CD4-positive, alpha-beta memory T cell (primary cell): ENCODE measurements at regions of chr14 and their contacts with region 1.

Region 1: GRCh38 chr14:104800015-104800770 is 708 bp upstream of the ZBTB42 start:
- DNase-seq: peak; percentile 76 to 81 (median 80)
- H3K4me3 ChIP-seq: peak overlapping the region in 1 of 2 donors; percentile 38
- H3K4me3 Mint-ChIP-seq: peak overlapping the region; percentile 50 to 77 (median 74)
- H3K27ac ChIP-seq: peak overlapping the region; percentile 51
- H3K27ac Mint-ChIP-seq: peak overlapping the region; percentile 58 to 92 (median 91)
- H3K4me1 ChIP-seq: peaks cover 41% of the 10 kb centered on the region
- H3K4me1 Mint-ChIP-seq: peaks cover 13 to 58% (median 37%) of the 10 kb centered on the region in 4 donors
- H3K27me3 ChIP-seq: no peaks in the 10 kb centered on the region
- H3K27me3 Mint-ChIP-seq: no peaks in the 10 kb centered on the region

Region 2: DNA sequence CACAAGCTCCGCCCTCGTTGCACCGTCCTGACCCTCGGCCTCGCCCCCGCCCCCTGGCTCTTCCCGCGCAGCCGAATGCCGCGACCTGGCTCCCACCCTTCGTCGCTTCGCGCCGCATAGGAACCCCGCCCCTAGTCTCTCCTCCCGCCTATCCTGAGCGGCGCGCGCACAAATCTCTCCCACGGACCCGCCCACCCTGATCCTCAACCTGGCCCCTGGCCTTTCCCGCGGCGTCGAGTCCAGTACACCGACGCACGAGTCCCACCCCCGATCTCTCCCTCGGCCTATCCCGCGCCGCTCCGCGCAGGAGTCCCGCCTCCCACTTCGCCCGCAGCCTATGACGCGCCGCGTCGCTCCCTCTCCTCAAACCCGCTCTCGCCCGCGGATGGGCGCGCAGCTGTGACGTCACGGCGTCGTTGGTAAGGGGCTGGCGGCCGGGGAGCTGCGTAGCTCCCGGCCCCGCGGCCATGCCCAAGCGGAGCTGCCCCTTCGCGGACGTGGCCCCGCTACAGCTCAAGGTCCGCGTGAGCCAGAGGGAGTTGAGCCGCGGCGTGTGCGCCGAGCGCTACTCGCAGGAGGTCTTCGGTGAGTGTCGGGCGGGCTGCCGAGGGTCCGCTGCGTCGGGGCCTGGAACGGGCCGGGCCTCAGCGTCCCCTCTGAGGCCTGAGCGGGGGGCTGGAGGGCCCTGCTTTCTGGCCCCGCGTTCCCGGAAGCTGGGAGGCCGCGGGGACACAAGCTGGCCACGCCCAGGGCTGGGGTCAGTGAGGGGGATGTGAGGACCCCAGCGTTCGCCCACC is 47.3 kb before region 1 on chr14 and contains the start of gene SIVA1:
- CTCF ChIA-PET with region 1: no interaction called
- POLR2A ChIA-PET with region 1: interaction called, 27 read pairs
- intact Hi-C with region 1: loop called (anchors 1 kb)
- DNase-seq: peak; percentile 99
- H3K4me3 ChIP-seq: peak within 1 kb of the TSS; percentile 57 to 93
- H3K4me3 Mint-ChIP-seq: peak within 1 kb of the TSS; percentile 88 to 96 (median 92)
- H3K27ac ChIP-seq: peak within 1 kb of the TSS; percentile 79
- H3K27ac Mint-ChIP-seq: peak within 1 kb of the TSS; percentile 91 to 95 (median 94)
- H3K4me1 ChIP-seq: peaks cover 25% of the 10 kb centered on the region
- H3K4me1 Mint-ChIP-seq: peaks cover 16 to 41% (median 29%) of the 10 kb centered on the region in 4 donors
- H3K27me3 ChIP-seq: no peaks in the 10 kb centered on the region
- H3K27me3 Mint-ChIP-seq: no peaks in the 10 kb centered on the region
- total RNA-seq, gene SIVA1: 69.3 to 80.2 TPM

Region 3: DNA sequence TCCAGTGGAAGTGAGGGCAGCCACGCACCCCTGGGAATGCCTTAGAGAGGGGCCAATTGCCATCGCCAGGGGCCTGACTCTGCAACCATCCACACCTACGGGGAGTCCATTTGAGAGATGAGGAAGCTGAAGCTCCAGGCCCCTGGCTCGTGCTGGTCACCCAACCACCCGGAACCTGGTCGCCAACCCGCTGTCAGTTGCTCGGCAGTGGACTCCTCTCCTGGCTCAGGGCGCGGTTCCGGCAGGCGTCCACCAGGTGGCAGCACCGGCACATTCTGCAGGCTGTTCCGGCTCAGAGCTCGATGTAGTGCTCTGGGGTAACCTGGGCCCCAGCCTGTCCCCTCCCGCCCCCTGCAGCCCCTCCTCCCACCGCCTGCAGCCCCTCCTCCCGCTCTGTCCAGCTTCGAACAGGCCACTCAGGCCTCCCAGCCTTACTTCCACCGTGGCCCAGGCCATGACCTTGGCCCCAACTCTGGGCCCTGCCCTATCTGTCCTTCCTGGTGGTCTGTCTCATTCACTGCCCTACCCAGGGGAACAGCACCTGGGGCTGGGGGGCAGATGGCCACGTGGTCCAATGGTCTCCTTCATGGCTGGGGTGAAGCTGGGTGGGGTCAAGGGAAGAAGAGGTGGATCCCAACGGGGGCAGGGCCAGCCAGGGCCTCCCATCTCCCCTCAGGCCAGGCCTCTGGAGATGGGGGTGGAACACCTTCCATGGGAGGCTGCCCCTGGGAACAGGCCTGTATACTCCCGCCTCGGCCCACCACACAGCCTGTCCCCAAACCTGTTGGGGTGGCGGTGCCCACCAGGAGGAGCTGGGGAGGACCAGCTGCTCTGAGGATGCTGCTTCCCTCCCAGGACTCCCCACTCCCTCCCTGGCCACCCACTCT is 31.5 kb before region 1 on chr14:
- CTCF ChIA-PET with region 1: no interaction called
- POLR2A ChIA-PET with region 1: interaction called, 5 read pairs
- intact Hi-C with region 1: loop called (anchors 2 kb)
- DNase-seq: peak; percentile 83 to 89 (median 86)
- H3K4me3 ChIP-seq: no peak overlapping the region
- H3K4me3 Mint-ChIP-seq: no peak overlapping the region
- H3K27ac ChIP-seq: no peak overlapping the region
- H3K27ac Mint-ChIP-seq: peak overlapping the region in 4 of 7 donors; percentile 11 to 77 (median 56)
- H3K4me1 ChIP-seq: peaks cover 3% of the 10 kb centered on the region
- H3K4me1 Mint-ChIP-seq: peaks cover 0 to 4% (median under 1%) of the 10 kb centered on the region in 4 donors
- H3K27me3 ChIP-seq: no peaks in the 10 kb centered on the region
- H3K27me3 Mint-ChIP-seq: no peaks in the 10 kb centered on the region

Region 4: DNA sequence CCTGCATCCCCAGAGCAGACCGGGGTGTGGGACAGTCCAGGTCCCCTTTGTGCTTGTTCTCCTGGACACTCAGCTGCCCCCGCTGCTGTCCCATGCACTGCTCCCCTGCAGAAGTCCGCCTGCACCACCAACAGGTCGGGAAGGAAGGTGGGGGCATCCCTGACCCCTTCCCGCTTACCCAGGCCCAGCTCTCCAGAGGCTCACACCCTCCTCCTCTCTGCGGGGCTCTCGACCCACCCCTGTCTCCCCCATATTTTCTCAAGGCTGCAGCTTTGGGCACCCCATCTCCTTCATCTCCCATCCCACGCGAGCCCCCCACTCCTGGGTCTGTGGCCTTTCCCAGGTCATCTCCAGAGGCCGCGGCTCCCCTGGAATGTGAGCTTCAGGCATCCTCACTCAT is 10.1 kb after region 1 on chr14:
- CTCF ChIA-PET with region 1: interaction called, 3 read pairs
- POLR2A ChIA-PET with region 1: interaction called, 16 read pairs
- intact Hi-C with region 1: no loop called
- DNase-seq: peak in 1 of 5 donors; percentile 21
- H3K4me3 ChIP-seq: no peak overlapping the region
- H3K4me3 Mint-ChIP-seq: no peak overlapping the region
- H3K27ac ChIP-seq: no peak overlapping the region
- H3K27ac Mint-ChIP-seq: no peak overlapping the region
- H3K4me1 ChIP-seq: peaks cover 16% of the 10 kb centered on the region
- H3K4me1 Mint-ChIP-seq: peaks cover 9 to 18% (median 12%) of the 10 kb centered on the region in 4 donors
- H3K27me3 ChIP-seq: no peaks in the 10 kb centered on the region
- H3K27me3 Mint-ChIP-seq: no peaks in the 10 kb centered on the region

Region 5: GRCh38 chr14:104819361-104819974 is 19.3 kb after region 1 on chr14:
- CTCF ChIA-PET with region 1: interaction called, 5 read pairs
- POLR2A ChIA-PET with region 1: interaction called, 12 read pairs
- intact Hi-C with region 1: no loop called
- DNase-seq: no peak
- H3K4me3 ChIP-seq: no peak overlapping the region
- H3K4me3 Mint-ChIP-seq: no peak overlapping the region
- H3K27ac ChIP-seq: no peak overlapping the region
- H3K27ac Mint-ChIP-seq: no peak overlapping the region
- H3K4me1 ChIP-seq: peaks cover 20% of the 10 kb centered on the region
- H3K4me1 Mint-ChIP-seq: peaks cover 6 to 25% (median 12%) of the 10 kb centered on the region in 4 donors
- H3K27me3 ChIP-seq: no peaks in the 10 kb centered on the region
- H3K27me3 Mint-ChIP-seq: peaks cover 0 to 2% of the 10 kb centered on the region in 2 donors

Region 6: DNA sequence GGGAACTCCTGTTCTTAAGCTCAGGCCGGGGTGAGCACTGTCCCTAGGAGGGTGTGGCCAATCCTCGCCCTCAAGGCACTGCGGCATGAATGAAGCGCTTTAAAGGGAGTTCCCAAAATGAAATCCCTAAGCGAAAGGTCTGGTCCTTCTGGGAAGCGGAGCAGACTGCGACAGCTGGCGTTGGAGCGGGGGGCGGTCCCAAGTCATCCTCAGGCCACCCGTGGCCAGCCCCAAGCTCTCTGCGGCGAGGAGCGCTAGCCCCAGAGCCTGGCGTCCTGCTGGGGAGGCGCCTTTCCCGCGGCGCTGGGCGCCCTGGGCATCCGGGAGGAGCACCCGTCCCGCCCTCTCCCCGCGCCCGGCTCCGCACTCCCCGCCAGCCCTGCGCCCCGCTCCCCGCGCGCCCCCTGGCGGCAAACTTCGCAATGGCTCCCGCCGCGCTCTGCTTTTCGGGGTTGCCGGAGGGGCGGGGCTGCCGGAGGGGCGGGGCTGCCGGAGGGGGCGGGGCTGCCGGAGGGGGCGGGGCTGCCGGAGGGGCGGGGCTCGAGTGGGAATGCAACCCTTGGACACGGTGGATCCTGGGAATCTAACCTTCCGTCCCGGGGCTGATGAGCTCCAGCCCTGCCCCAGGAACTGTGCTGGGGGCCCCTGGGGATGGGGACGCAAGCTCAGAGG is 26.1 kb after region 1 on chr14:
- CTCF ChIA-PET with region 1: interaction called, 13 read pairs
- POLR2A ChIA-PET with region 1: interaction called, 25 read pairs
- intact Hi-C with region 1: loop called (anchors 1 kb)
- DNase-seq: peak; percentile 88 to 97 (median 90)
- H3K4me3 ChIP-seq: peak overlapping the region; percentile 61 to 70
- H3K4me3 Mint-ChIP-seq: peak overlapping the region; percentile 66 to 93 (median 86)
- H3K27ac ChIP-seq: peak overlapping the region; percentile 14
- H3K27ac Mint-ChIP-seq: peak overlapping the region in 4 of 7 donors; percentile 29 to 92 (median 63)
- H3K4me1 ChIP-seq: peaks cover 21% of the 10 kb centered on the region
- H3K4me1 Mint-ChIP-seq: peaks cover 14 to 32% (median 24%) of the 10 kb centered on the region in 4 donors
- H3K27me3 ChIP-seq: no peaks in the 10 kb centered on the region
- H3K27me3 Mint-ChIP-seq: peaks cover 2 to 7% of the 10 kb centered on the region in 2 donors

Region 7: DNA sequence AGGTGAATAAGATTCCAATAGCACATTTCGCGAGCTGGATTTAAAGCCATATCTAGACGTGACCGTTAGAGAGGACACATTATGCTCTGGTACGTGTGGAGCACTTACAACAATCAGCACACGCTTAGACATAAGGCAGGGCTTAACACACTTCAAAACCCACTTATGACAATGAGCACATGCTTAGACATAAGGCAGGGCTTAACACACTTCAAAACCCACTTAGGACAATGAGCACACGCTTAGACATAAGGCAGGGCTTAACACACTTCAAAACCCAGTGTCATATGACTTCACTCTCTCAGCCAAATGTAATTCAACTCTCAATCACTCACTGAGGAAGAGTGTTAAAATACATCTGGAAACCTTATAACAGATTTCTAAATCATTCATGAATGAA is 113.2 kb after region 1 on chr14:
- CTCF ChIA-PET with region 1: no interaction called
- POLR2A ChIA-PET with region 1: no interaction called
- intact Hi-C with region 1: no loop called
- DNase-seq: no peak
- H3K4me3 ChIP-seq: no peak overlapping the region
- H3K4me3 Mint-ChIP-seq: no peak overlapping the region
- H3K27ac ChIP-seq: no peak overlapping the region
- H3K27ac Mint-ChIP-seq: no peak overlapping the region
- H3K4me1 ChIP-seq: no peaks in the 10 kb centered on the region
- H3K4me1 Mint-ChIP-seq: no peaks in the 10 kb centered on the region
- H3K27me3 ChIP-seq: no peaks in the 10 kb centered on the region
- H3K27me3 Mint-ChIP-seq: peaks cover 28 to 29% of the 10 kb centered on the region in 2 donors

Region 8: GRCh38 chr14:104953896-104954656 is 153.9 kb after region 1 on chr14:
- CTCF ChIA-PET with region 1: no interaction called
- POLR2A ChIA-PET with region 1: no interaction called
- intact Hi-C with region 1: no loop called
- DNase-seq: no peak
- H3K4me3 ChIP-seq: no peak overlapping the region
- H3K4me3 Mint-ChIP-seq: no peak overlapping the region
- H3K27ac ChIP-seq: no peak overlapping the region
- H3K27ac Mint-ChIP-seq: no peak overlapping the region
- H3K4me1 ChIP-seq: no peaks in the 10 kb centered on the region
- H3K4me1 Mint-ChIP-seq: no peaks in the 10 kb centered on the region
- H3K27me3 ChIP-seq: no peaks in the 10 kb centered on the region
- H3K27me3 Mint-ChIP-seq: peaks cover 16 to 19% of the 10 kb centered on the region in 2 donors